ENCODE measurements at regions of chr10 and their contacts with region 1.

Region 1: GRCh38 chr10:71268247-71268691 is 50.8 kb upstream of the SLC29A3 start:
- DNase-seq: no peak
- H3K4me3 ChIP-seq: no peak overlapping the region
- H3K27ac ChIP-seq: peak overlapping the region; percentile 88
- H3K4me1 ChIP-seq: peaks cover 92% of the 10 kb centered on the region
- H3K27me3 ChIP-seq: no peaks in the 10 kb centered on the region
- CTCF ChIP-seq: peak; percentile 69

Region 2: GRCh38 chr10:71212318-71213126 is 55.7 kb before region 1 on chr10 and contains the start of gene UNC5B:
- intact Hi-C with region 1: loop called (anchors 5 kb)
- DNase-seq: peak; percentile 93
- H3K4me3 ChIP-seq: peak within 1 kb of the TSS; percentile 74
- H3K27ac ChIP-seq: peak within 1 kb of the TSS; percentile 88
- H3K4me1 ChIP-seq: peaks cover 60% of the 10 kb centered on the region
- H3K27me3 ChIP-seq: peaks cover 18% of the 10 kb centered on the region
- CTCF ChIP-seq: peak; percentile 65
- total RNA-seq, gene UNC5B: 15.6 TPM

Region 3: DNA sequence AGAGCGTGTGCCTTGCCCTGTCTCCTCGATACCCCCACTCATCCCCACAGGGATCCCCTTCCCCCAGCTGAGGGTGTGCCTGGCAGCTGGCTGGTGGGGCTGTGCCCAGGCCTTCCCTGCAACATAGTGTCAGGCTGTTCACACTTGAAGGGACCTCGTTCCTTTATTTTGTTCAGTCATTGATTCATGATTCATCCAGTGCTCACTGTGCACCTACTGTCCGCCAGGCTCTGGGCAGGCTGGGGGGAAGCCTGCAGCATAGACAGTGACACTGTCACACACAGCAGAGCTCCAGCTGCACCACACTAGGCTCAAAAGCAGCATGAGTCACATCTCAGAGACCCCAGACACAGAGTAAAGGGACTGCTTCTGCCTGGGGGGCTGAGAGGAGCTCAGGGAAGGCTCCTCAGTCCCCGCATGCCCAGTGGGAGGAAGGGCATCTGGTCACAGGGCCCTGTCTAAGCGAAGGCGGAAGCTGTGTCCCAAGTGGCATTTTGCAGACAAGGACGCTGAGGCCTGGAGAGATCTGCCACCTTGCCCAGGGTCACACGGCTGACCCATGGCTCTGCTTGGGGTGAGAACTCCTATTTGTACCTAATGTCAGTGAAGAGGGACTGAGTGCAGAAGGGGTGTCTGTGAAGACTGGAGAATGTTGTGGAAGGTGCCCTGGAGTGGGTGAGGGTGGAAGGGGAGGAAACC is 156.4 kb after region 1 on chr10:
- intact Hi-C with region 1: no loop called
- DNase-seq: no peak
- H3K4me3 ChIP-seq: no peak overlapping the region
- H3K27ac ChIP-seq: no peak overlapping the region
- H3K4me1 ChIP-seq: peaks cover 9% of the 10 kb centered on the region
- H3K27me3 ChIP-seq: no peaks in the 10 kb centered on the region
- CTCF ChIP-seq: no peak